CD4-positive, alpha-beta T cell (primary cell): ENCODE measurements at regions of chr4 and their contacts with region 1.

Region 1: GRCh38 chr4:173420324-173420752 is 21.4 kb upstream of the SCRG1 start:
- DNase-seq: peak in 3 of 14 experiments; percentile 38 to 43 (median 38)
- ATAC-seq: peak; percentile 57
- H3K4me3 ChIP-seq: no peak overlapping the region
- H3K4me3 Mint-ChIP-seq: no peak overlapping the region
- H3K27ac ChIP-seq: no peak overlapping the region
- H3K27ac Mint-ChIP-seq: no peak overlapping the region
- H3K4me1 ChIP-seq: peaks cover 8% of the 10 kb centered on the region
- H3K4me1 Mint-ChIP-seq: peaks cover 10% of the 10 kb centered on the region
- H3K27me3 ChIP-seq: no peaks in the 10 kb centered on the region
- H3K27me3 Mint-ChIP-seq: no peaks in the 10 kb centered on the region
- CTCF ChIP-seq: peak; percentile 61

Region 2: DNA sequence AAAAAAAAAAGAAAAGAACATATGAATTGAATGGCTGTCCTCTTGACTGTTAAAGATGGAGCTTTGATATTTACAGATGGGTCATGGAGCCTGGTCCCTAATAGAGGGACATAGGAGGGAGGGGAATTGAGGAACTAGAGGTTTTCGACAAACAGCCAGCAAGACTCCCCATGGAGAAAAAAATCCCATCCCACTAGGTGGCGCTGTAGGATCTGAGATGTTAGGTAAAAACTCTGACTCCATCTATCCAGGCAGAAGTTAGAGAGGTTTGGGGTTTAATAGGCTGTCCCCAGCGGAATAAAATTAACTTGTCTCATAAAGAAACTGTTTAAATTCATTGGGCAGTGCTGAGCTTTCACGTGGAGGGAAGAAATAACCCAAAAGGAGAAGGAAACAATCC is 132.0 kb before region 1 on chr4:
- CTCF ChIA-PET with region 1: interaction called, 3 read pairs
- POLR2A ChIA-PET with region 1: no interaction called
- intact Hi-C with region 1: loop called in 1 of 2 experiments (anchors 1 kb)
- DNase-seq: peak; percentile 36 to 80 (median 63)
- ATAC-seq: peak; percentile 56
- H3K4me3 ChIP-seq: no peak overlapping the region
- H3K4me3 Mint-ChIP-seq: peak overlapping the region; percentile 45
- H3K27ac ChIP-seq: no peak overlapping the region
- H3K27ac Mint-ChIP-seq: peak overlapping the region; percentile 6
- H3K4me1 ChIP-seq: peaks cover 3% of the 10 kb centered on the region
- H3K4me1 Mint-ChIP-seq: peaks cover 17% of the 10 kb centered on the region
- H3K27me3 ChIP-seq: no peaks in the 10 kb centered on the region
- H3K27me3 Mint-ChIP-seq: no peaks in the 10 kb centered on the region
- CTCF ChIP-seq: peak; percentile 68

Region 3: GRCh38 chr4:173334085-173334772 is 86.1 kb before region 1 on chr4 and contains the start of gene HMGB2:
- CTCF ChIA-PET with region 1: interaction called, 4 read pairs
- POLR2A ChIA-PET with region 1: interaction called, 13 read pairs
- intact Hi-C with region 1: no loop called
- DNase-seq: peak; percentile 99 to 100 (median 100)
- ATAC-seq: peak; percentile 92
- H3K4me3 ChIP-seq: peak within 1 kb of the TSS; percentile 88
- H3K4me3 Mint-ChIP-seq: peak within 1 kb of the TSS; percentile 98
- H3K27ac ChIP-seq: peak within 1 kb of the TSS; percentile 78 to 93
- H3K27ac Mint-ChIP-seq: peak within 1 kb of the TSS; percentile 96
- H3K4me1 ChIP-seq: peaks cover 16% of the 10 kb centered on the region
- H3K4me1 Mint-ChIP-seq: peaks cover 37% of the 10 kb centered on the region
- H3K27me3 ChIP-seq: no peaks in the 10 kb centered on the region
- H3K27me3 Mint-ChIP-seq: peaks cover 13% of the 10 kb centered on the region
- CTCF ChIP-seq: no peak
- total RNA-seq, gene HMGB2: 228 to 232 TPM

Region 4: DNA sequence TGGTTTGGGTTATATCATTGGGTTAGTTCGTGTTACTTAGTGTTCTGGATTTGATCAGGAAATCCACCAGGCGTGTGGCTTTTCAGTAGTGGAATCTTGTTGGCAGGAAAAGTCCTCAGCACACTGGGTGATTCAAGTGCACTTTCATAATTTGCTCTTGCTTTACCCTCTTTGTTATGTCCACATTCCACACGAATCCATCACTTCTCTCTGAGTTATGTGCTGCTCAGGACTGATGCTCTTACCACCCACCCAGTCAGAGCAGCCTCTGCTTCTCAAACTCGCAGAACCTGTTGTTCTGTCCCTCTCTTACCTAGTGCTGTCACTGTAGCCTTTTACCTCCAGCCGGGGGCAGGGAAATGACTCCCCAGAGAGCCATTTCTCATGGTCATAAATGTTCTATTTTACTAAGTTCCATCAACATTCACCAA is 15.8 kb after region 1 on chr4:
- CTCF ChIA-PET with region 1: no interaction called
- POLR2A ChIA-PET with region 1: no interaction called
- intact Hi-C with region 1: no loop called
- DNase-seq: no peak
- ATAC-seq: no peak
- H3K4me3 ChIP-seq: no peak overlapping the region
- H3K4me3 Mint-ChIP-seq: no peak overlapping the region
- H3K27ac ChIP-seq: no peak overlapping the region
- H3K27ac Mint-ChIP-seq: no peak overlapping the region
- H3K4me1 ChIP-seq: no peaks in the 10 kb centered on the region
- H3K4me1 Mint-ChIP-seq: peaks cover 7% of the 10 kb centered on the region
- H3K27me3 ChIP-seq: no peaks in the 10 kb centered on the region
- H3K27me3 Mint-ChIP-seq: no peaks in the 10 kb centered on the region
- CTCF ChIP-seq: no peak

Region 5: GRCh38 chr4:173494013-173494970 is 74.0 kb after region 1 on chr4:
- CTCF ChIA-PET with region 1: interaction called, 10 read pairs
- POLR2A ChIA-PET with region 1: interaction called, 12 read pairs
- intact Hi-C with region 1: loop called (anchors 1 kb)
- DNase-seq: peak in 13 of 14 experiments; percentile 17 to 84 (median 40)
- ATAC-seq: peak; percentile 98
- H3K4me3 ChIP-seq: peak overlapping the region; percentile 53
- H3K4me3 Mint-ChIP-seq: peak overlapping the region; percentile 85
- H3K27ac ChIP-seq: no peak overlapping the region
- H3K27ac Mint-ChIP-seq: no peak overlapping the region
- H3K4me1 ChIP-seq: peaks cover 9% of the 10 kb centered on the region
- H3K4me1 Mint-ChIP-seq: peaks cover 22% of the 10 kb centered on the region
- H3K27me3 ChIP-seq: peaks cover 8 to 24% of the 10 kb centered on the region in 2 experiments
- H3K27me3 Mint-ChIP-seq: peaks cover 65% of the 10 kb centered on the region
- CTCF ChIP-seq: peak; percentile 68

Region 6: DNA sequence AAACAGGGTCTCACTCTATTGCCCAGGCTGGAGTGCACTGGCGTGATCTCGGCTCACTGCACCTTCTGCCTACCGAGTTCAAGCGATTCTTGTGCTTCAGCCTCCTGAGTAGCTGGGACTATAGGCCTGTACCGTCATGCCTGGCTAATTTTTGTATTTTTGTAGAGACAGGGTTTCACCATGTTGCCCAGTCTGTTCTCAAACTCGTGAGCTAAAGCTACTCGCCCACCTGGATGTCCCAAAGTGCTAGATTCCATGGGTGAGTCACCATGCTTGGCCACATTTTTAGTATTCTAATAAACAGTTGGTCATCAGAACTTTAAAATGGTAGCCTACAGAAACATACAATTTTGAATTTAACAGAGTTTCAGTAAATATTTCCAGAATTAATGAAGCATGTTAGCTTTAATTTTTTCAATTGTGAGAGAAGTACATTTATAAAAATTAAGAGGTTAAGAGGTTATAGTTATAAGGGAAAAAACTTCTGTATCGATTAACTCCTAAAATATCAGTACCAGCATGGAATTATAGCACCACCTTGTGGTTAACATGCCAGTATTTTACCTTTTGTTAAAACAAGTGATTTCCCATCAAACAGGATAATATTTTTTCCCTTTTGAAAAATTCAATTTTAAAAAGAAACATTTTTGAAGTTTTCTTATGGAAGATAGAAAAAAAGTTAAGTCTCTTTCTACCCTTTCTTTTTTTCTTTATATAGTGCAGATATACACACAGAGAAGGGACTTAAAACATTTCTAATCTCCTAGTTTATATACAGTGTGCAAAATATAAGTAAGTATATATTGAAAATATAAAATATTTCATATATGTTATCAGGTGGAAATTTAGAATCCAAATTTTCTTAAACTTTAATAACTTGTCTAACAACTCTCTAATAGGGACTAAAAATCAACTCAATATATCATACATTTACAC is 898.8 kb after region 1 on chr4:
- CTCF ChIA-PET with region 1: no interaction called
- POLR2A ChIA-PET with region 1: no interaction called
- intact Hi-C with region 1: loop called in 1 of 2 experiments (anchors 5 kb)
- DNase-seq: peak in 3 of 14 experiments; percentile 47 to 62 (median 52)
- ATAC-seq: no peak
- H3K4me3 ChIP-seq: no peak overlapping the region
- H3K4me3 Mint-ChIP-seq: no peak overlapping the region
- H3K27ac ChIP-seq: no peak overlapping the region
- H3K27ac Mint-ChIP-seq: no peak overlapping the region
- H3K4me1 ChIP-seq: no peaks in the 10 kb centered on the region
- H3K4me1 Mint-ChIP-seq: no peaks in the 10 kb centered on the region
- H3K27me3 ChIP-seq: no peaks in the 10 kb centered on the region
- H3K27me3 Mint-ChIP-seq: no peaks in the 10 kb centered on the region
- CTCF ChIP-seq: peak; percentile 83